Right ventricle myocardium inferior (tissue), 1 donor: ENCODE measurements at regions of chr6 and their contacts with region 1.

Region 1: DNA sequence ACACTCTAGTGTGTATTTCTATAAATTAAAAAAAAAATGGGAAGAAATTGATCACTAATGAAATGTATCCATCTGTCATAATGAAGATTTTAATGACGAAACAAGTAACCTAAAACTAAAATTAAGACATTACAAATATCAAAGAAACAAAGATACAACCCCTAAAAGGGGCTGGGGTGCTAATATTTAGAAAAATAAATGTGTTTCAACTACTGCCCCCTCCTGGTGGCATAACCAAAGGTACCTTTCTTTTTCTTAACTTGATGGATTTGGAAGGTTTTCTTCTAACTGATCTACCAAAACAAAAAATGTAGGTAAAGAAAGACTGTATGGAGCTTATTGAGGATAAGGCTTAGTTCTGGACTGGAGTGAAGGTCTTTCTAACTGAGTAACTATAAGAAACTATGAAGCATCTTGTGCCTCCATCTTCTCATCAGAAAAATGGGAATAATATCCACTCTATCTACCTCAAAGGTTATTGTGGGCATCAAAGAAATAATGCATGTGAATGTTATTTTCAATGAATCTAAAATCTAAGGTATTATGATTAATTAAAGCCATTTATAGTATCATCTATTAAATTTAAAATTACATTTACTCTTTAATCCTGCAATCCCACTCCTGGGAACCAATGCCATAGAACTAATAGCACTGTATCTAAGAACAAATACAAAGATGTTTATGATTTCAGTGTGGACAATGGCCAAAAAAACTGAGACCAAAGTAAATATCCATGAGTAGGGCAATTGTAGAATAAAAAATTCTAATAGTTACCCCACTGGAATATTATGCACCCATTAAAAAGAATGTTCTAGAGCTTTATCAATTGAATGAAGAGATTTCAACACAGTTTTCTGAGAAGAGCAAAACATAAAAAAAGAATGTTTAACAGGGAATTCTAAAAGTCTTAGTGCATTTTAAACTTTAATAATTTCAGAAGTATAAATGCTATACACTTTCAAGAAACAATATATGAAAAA is 117.2 kb downstream of the BACH2 start:
- DNase-seq: no peak
- ATAC-seq: no peak

Region 2: DNA sequence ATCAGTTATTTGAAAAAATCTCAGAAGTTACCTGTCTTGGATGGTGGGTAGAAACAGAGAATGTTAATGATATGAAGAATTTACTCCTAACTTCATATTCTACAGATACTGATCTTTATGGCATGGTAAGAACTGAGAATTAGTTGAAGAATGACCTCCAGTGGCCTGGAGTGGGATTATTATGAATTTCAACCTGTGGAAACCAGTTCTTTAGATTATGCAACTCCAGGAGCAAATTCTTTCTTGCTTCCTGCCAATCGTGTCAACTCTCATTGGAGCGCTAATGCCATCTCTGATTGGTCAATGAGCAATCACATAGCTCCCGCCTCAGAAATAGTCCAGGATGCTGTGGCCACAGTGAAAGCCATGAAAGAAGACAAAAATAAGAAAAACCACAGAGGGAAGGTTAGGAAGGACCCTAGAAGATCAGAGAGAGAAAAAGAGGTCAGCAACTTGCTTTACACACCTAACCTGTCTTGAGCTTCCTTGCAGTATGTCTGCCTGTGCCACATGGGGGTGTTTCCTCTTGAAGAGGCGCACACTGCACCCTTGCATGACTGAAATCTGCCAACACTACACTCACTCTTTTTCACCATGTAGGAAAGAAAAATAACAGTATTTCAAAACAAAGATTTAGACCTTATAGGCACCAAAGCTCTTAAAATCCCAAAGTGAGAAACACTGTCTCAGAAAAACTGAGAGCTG is 581.3 kb before region 1 on chr6:
- intact Hi-C with region 1: no loop called
- DNase-seq: no peak
- ATAC-seq: no peak

Region 3: DNA sequence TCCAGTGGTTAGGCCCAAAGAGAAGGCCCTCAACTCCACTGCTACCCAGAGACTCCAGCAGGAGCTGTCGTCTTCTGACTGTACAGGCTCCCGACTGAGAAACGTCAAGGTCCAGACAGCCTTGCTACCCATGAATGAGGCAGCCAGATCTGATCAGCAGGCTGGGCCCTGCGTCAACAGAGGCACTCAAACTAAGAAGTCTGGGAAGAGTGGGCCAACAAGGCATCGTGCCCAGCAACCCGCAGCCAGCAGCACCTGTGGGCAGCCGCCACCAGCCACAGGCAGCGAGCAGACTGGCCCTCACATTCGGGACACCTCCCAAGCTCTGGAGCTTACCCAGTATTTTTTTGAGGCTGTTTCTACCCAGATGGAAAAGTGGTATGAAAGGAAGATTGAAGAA is 549.0 kb before region 1 on chr6:
- intact Hi-C with region 1: no loop called
- DNase-seq: peak; percentile 74
- ATAC-seq: peak; percentile 86

Region 4: GRCh38 chr6:90216072-90216977 is 36.8 kb after region 1 on chr6:
- intact Hi-C with region 1: loop called (anchors 5 kb)
- DNase-seq: no peak
- ATAC-seq: no peak

Region 5: GRCh38 chr6:90285611-90286381 is 106.3 kb after region 1 on chr6:
- intact Hi-C with region 1: loop called (anchors 5 kb)
- DNase-seq: peak; percentile 91
- ATAC-seq: peak; percentile 100

Region 6: GRCh38 chr6:90328004-90328403 is 148.5 kb after region 1 on chr6:
- intact Hi-C with region 1: no loop called
- DNase-seq: no peak
- ATAC-seq: no peak